ENCODE measurements at regions of chr16 and their contacts with region 1.

Region 1: DNA sequence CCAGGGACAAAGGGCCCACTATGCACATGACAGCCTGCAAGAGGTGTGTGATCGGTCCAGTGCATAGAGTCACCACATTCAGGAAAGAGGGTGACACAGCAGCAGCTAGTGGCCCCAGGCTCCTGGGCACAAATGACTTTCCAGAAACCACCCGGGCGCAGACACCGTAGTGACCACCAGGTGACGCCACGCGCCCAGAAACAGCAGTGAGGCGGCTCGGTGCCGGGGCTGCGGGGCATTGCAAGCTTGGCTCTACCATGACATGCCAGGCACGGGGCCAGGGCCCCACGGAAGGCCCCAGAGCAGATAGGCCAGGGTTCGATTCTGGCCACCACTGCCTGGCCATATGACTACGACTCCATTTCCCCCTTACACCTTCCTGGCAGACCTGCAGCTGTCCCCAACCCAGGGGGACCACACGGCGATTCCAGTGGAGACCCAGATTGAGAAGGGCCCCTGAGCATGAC is 6.7 kb downstream of the RHBDF1 start:
- DNase-seq: peak; percentile 87
- ATAC-seq: peak; percentile 94
- H3K4me3 ChIP-seq: no peak overlapping the region
- H3K4me3 Mint-ChIP-seq: no peak overlapping the region
- H3K27ac ChIP-seq: no peak overlapping the region
- H3K27ac Mint-ChIP-seq: peak overlapping the region; percentile 56
- H3K4me1 ChIP-seq: peaks cover 0 to 8% of the 10 kb centered on the region in 2 donors
- H3K4me1 Mint-ChIP-seq: peaks cover 7% of the 10 kb centered on the region
- H3K27me3 ChIP-seq: peaks cover 0 to 15% (median 3%) of the 10 kb centered on the region in 4 experiments
- H3K27me3 Mint-ChIP-seq: peaks cover 6% of the 10 kb centered on the region
- CTCF ChIP-seq: peak; percentile 96

Region 2: GRCh38 chr16:38939-39892 is 26.5 kb before region 1 on chr16:
- CTCF ChIA-PET with region 1: interaction called, 35 read pairs
- POLR2A ChIA-PET with region 1: interaction called, 4 read pairs
- intact Hi-C with region 1: no loop called
- DNase-seq: peak; percentile 93
- ATAC-seq: peak; percentile 86
- H3K4me3 ChIP-seq: peak overlapping the region in 1 of 5 experiments; percentile 39
- H3K4me3 Mint-ChIP-seq: peak overlapping the region; percentile 75
- H3K27ac ChIP-seq: peak overlapping the region; percentile 91 to 99
- H3K27ac Mint-ChIP-seq: peak overlapping the region; percentile 94
- H3K4me1 ChIP-seq: peaks cover 57 to 69% of the 10 kb centered on the region in 2 donors
- H3K4me1 Mint-ChIP-seq: peaks cover 73% of the 10 kb centered on the region
- H3K27me3 ChIP-seq: no peaks in the 10 kb centered on the region
- H3K27me3 Mint-ChIP-seq: no peaks in the 10 kb centered on the region
- CTCF ChIP-seq: no peak

Region 3: GRCh38 chr16:77807-78443 is 12.2 kb after region 1 on chr16 and contains the start of gene MPG:
- CTCF ChIA-PET with region 1: interaction called, 22 read pairs
- POLR2A ChIA-PET with region 1: interaction called, 3 read pairs
- intact Hi-C with region 1: loop called (anchors 1 kb)
- DNase-seq: peak; percentile 86
- ATAC-seq: peak; percentile 87
- H3K4me3 ChIP-seq: peak within 1 kb of the TSS; percentile 24 to 82 (median 77)
- H3K4me3 Mint-ChIP-seq: peak within 1 kb of the TSS; percentile 90
- H3K27ac ChIP-seq: peak within 1 kb of the TSS; percentile 18 to 75
- H3K27ac Mint-ChIP-seq: peak within 1 kb of the TSS; percentile 86
- H3K4me1 ChIP-seq: peaks cover 27 to 29% of the 10 kb centered on the region in 2 donors
- H3K4me1 Mint-ChIP-seq: peaks cover 30% of the 10 kb centered on the region
- H3K27me3 ChIP-seq: peaks cover 0 to 17% (median 9%) of the 10 kb centered on the region in 4 experiments
- H3K27me3 Mint-ChIP-seq: peaks cover 13% of the 10 kb centered on the region
- CTCF ChIP-seq: no peak
- total RNA-seq, gene MPG: 58.3 and 66.4 TPM in 2 replicates

Region 4: DNA sequence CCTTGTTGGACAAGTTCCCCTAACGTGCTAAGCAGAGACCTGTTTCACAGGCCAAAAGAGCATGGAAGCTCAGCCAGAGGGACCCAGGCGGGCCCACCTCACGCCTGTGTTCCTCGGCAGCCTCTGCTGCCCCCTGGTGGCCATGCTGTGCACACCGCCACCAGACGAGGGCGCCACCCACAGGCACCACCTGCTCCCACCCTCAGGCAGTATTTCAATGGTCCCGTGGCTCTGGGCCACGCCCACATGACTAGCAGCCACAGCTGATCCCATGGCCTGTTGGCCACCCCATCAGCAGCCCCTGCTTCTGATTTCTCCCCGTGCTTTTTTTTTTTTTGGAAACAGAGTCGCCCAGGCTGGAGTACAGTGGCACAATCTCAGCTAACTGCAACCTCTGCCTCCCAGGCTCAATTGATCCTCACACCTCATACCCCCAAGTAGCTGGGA is 31.3 kb after region 1 on chr16:
- CTCF ChIA-PET with region 1: interaction called, 401 read pairs
- POLR2A ChIA-PET with region 1: interaction called, 9 read pairs
- intact Hi-C with region 1: loop called (anchors 1 kb)
- DNase-seq: peak; percentile 95
- ATAC-seq: peak; percentile 99
- H3K4me3 ChIP-seq: no peak overlapping the region
- H3K4me3 Mint-ChIP-seq: no peak overlapping the region
- H3K27ac ChIP-seq: no peak overlapping the region
- H3K27ac Mint-ChIP-seq: peak overlapping the region; percentile 62
- H3K4me1 ChIP-seq: peaks cover 0 to 10% of the 10 kb centered on the region in 2 donors
- H3K4me1 Mint-ChIP-seq: peaks cover 6% of the 10 kb centered on the region
- H3K27me3 ChIP-seq: no peaks in the 10 kb centered on the region
- H3K27me3 Mint-ChIP-seq: no peaks in the 10 kb centered on the region
- CTCF ChIP-seq: peak; percentile 97

Region 5: DNA sequence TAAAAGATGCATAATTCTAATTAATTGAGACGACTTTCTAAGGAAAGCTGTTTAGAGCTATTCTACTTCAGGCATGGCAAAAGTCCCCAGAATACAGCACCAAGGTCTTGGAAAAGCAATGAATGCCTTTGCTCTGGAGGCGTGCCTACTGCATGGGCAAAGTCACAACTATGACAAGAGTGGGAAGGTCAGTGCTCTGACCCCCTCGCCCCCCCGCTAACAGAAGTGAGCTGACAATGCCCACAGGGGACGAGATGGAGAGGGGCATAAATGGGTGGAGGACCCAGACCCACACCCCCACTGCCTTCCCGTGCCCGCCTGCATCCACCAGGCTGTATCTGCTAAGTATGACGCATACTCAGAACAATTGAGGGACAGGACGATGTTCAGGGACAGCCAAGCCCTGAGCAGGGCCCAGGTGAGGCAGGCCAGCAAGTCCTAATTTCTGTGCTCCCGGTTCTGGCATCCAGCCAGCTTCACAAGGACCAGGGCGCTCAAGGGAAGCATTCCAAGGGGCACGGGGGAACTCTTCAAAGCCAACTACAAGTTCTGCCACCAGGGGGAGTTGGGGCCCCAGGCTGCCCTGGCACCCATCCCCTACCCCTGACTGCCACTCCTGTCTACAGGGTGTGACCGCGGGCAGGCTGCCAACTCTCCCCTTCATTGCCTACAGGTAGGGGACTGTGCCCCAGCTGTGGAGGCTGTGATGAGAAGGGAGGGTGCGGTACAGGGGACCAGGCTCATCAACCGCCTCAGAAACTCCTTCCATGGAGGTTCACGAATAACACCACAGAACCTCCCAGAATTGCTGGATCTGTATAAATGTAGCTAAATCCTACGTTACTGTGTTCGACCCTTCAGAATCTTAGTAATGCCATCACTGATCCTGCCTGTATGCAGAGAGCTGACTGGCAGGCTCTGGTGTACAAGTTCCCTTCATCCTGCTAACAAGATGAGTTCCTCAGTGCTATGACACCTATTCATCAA is 52.0 kb after region 1 on chr16:
- CTCF ChIA-PET with region 1: interaction called, 11 read pairs
- POLR2A ChIA-PET with region 1: no interaction called
- intact Hi-C with region 1: no loop called
- DNase-seq: peak; percentile 78
- ATAC-seq: peak; percentile 80
- H3K4me3 ChIP-seq: no peak overlapping the region
- H3K4me3 Mint-ChIP-seq: no peak overlapping the region
- H3K27ac ChIP-seq: no peak overlapping the region
- H3K27ac Mint-ChIP-seq: no peak overlapping the region
- H3K4me1 ChIP-seq: peaks cover 0 to 6% of the 10 kb centered on the region in 2 donors
- H3K4me1 Mint-ChIP-seq: peaks cover 4% of the 10 kb centered on the region
- H3K27me3 ChIP-seq: no peaks in the 10 kb centered on the region
- H3K27me3 Mint-ChIP-seq: no peaks in the 10 kb centered on the region
- CTCF ChIP-seq: peak; percentile 82

Region 6: DNA sequence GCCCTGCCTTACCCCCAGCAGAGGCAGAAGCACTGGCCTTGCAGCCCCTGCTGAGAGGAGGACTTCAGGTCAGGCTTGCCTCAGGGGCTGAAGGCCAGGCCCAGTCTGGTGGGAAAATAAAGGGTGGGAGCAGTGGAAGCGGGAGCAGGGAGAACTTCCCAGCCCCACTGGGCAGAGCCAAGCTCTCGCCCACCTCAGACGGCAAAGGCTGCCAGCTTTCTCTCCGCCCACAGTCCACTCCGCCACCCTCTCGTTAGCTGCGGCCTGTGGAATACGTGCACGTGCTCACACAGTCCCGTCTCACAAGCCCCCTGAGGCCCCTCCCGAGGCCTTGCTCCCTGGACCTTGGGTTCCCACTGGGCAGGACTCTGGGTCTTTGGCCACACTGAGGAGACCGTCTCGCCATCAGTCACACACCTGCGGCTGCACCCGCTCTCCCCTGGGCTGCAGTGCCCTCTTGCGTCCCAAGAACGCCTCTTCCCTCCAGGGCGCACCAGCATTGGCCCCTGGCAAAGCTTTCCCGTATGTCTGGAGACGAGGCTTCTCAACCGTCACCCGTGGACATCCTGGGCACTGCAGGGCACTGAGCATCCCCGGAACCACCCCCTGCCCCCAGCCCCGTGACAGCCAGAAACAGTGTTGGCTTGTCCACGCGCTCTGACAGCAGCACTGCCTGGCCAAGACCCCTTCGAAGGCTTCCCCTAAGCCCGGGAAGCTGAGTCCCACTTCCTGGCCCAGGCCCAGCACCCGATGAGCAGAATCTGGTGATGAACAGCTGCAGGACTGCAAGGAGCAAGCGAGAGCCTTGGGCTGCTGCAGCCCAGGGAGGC is 296.4 kb after region 1 on chr16:
- CTCF ChIA-PET with region 1: interaction called, 19 read pairs
- POLR2A ChIA-PET with region 1: no interaction called
- intact Hi-C with region 1: loop called (anchors 1 kb)
- DNase-seq: peak; percentile 80
- ATAC-seq: peak; percentile 89
- H3K4me3 ChIP-seq: no peak overlapping the region
- H3K4me3 Mint-ChIP-seq: no peak overlapping the region
- H3K27ac ChIP-seq: no peak overlapping the region
- H3K27ac Mint-ChIP-seq: peak overlapping the region; percentile 13
- H3K4me1 ChIP-seq: peaks cover 0 to 8% of the 10 kb centered on the region in 2 donors
- H3K4me1 Mint-ChIP-seq: peaks cover 4% of the 10 kb centered on the region
- H3K27me3 ChIP-seq: peaks cover 0 to 10% (median 0%) of the 10 kb centered on the region in 4 experiments
- H3K27me3 Mint-ChIP-seq: peaks cover 5% of the 10 kb centered on the region
- CTCF ChIP-seq: peak; percentile 75